ENCODE measurements at regions of chr11 and their contacts with region 1.

Region 1: GRCh38 chr11:64185816-64186498 is at the start of gene STIP1:
- DNase-seq: peak; percentile 100
- ATAC-seq: peak; percentile 92
- H3K4me3 ChIP-seq: peak within 1 kb of the TSS; percentile 60 to 75 (median 60)
- H3K27ac ChIP-seq: peak within 1 kb of the TSS; percentile 83
- H3K4me1 ChIP-seq: peaks cover 51% of the 10 kb centered on the region
- H3K27me3 ChIP-seq: no peaks in the 10 kb centered on the region
- CTCF ChIP-seq: peak; percentile 60
- EP300 ChIP-seq: peak in 1 of 2 experiments; percentile 62; a peak in 2 of 4 replicates
- POLR2A ChIP-seq: peak in 1 of 2 experiments; percentile 82; a peak in 2 of 4 replicates
- RAD21 ChIP-seq: no peak; the same call in 1 of the 2 replicates
- total RNA-seq, gene STIP1: 217 and 245 TPM in 2 replicates

Region 2: GRCh38 chr11:64088162-64089026 is 97.6 kb before region 1 on chr11:
- CTCF ChIA-PET with region 1: no interaction called
- POLR2A ChIA-PET with region 1: no interaction called
- in situ Hi-C with region 1: no loop called
- intact Hi-C with region 1: no loop called
- DNase-seq: peak; percentile 45
- ATAC-seq: peak; percentile 34
- H3K4me3 ChIP-seq: no peak overlapping the region
- H3K27ac ChIP-seq: no peak overlapping the region
- H3K4me1 ChIP-seq: peaks cover 59% of the 10 kb centered on the region
- H3K27me3 ChIP-seq: no peaks in the 10 kb centered on the region
- CTCF ChIP-seq: peak; percentile 70
- EP300 ChIP-seq: no peak
- POLR2A ChIP-seq: no peak
- RAD21 ChIP-seq: 0 out of 2 replicates have a peak, but pooled peaks have one; percentile 37

Region 3: GRCh38 chr11:64165849-64166635 is 19.9 kb before region 1 on chr11 and contains the start of gene MACROD1:
- CTCF ChIA-PET with region 1: no interaction called
- POLR2A ChIA-PET with region 1: interaction called, 31 read pairs
- in situ Hi-C with region 1: no loop called
- intact Hi-C with region 1: no loop called
- DNase-seq: peak; percentile 86
- ATAC-seq: peak; percentile 93
- H3K4me3 ChIP-seq: peak within 1 kb of the TSS; percentile 55 to 94 (median 94)
- H3K27ac ChIP-seq: peak within 1 kb of the TSS; percentile 89
- H3K4me1 ChIP-seq: peaks cover 43% of the 10 kb centered on the region
- H3K27me3 ChIP-seq: no peaks in the 10 kb centered on the region; a peak in 1 of 5 replicates
- CTCF ChIP-seq: no peak; the same call in 1 of the 2 replicates
- EP300 ChIP-seq: no peak
- POLR2A ChIP-seq: peak; percentile 63 to 76; a peak in 3 of 4 replicates
- RAD21 ChIP-seq: peak; percentile 54; the same call in 1 of the 2 replicates
- total RNA-seq, gene MACROD1: 34.5 and 39.6 TPM in 2 replicates

Region 4: DNA sequence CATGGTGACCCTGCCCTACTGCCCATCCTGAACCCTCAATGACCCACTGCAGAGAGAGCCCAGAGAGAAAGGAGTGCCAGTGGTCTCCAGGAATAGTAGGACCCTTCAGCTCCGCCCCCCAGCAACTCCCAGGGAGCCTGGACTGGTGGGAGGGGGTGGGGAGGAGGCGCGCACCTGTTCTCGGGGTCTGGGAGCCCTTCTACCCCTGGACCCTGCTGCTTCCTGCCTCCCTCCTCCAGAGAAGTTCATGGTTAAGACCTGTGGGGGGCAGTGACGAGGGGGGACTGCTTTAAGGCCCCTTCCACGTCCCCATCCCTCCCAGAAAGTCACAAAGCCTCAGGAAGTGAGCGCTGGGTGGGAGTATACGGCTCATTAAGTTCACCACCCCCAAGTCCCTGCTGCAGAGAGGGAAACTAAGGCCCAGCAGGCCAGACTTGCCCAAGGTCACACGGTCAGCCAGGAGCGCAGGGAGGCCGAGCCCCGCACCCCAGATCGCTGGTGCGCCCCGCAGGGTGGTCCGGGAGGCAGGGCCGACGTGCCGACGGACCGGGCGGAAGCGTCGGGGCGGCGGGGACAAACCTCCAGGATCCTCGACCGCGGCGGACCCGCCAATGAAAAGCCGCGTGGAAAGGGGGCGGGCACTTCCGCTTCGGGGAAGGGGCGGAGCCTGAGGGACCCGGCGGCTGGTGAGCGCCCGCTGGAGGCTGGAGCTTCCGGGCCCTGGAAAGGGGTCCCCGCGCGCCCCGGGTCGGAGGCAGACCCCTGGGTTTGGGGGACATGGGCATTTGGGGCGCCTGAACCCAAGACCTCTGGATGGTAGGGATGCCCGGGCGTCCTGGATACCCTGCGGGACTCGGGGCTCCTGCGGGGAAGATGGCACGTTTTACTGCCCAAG is 39.9 kb after region 1 on chr11 and contains the starts of genes NUDT22 and TRPT1:
- CTCF ChIA-PET with region 1: no interaction called
- POLR2A ChIA-PET with region 1: interaction called, 19 read pairs
- in situ Hi-C with region 1: no loop called
- intact Hi-C with region 1: no loop called
- DNase-seq: peak; percentile 77
- ATAC-seq: peak; percentile 78
- H3K4me3 ChIP-seq: peak within 1 kb of the TSS; percentile 78 to 96 (median 82)
- H3K27ac ChIP-seq: peak within 1 kb of the TSS; percentile 56
- H3K4me1 ChIP-seq: peaks cover 34% of the 10 kb centered on the region
- H3K27me3 ChIP-seq: no peaks in the 10 kb centered on the region
- CTCF ChIP-seq: peak; percentile 65
- EP300 ChIP-seq: no peak
- POLR2A ChIP-seq: peak in 1 of 2 experiments; percentile 9; a peak in 1 of 4 replicates
- RAD21 ChIP-seq: no peak
- total RNA-seq, gene NUDT22: 38.5 and 39.8 TPM in 2 replicates
- total RNA-seq, gene TRPT1: 21.0 and 24.8 TPM in 2 replicates

Region 5: GRCh38 chr11:64246871-64247728 is 61.1 kb after region 1 on chr11 and contains the start of gene PPP1R14B:
- CTCF ChIA-PET with region 1: no interaction called
- POLR2A ChIA-PET with region 1: interaction called, 20 read pairs
- in situ Hi-C with region 1: no loop called
- intact Hi-C with region 1: loop called (anchors 2 kb)
- DNase-seq: peak; percentile 80
- ATAC-seq: peak; percentile 71
- H3K4me3 ChIP-seq: peak within 1 kb of the TSS; percentile 79 to 95 (median 84)
- H3K27ac ChIP-seq: peak within 1 kb of the TSS; percentile 83
- H3K4me1 ChIP-seq: peaks cover 69% of the 10 kb centered on the region
- H3K27me3 ChIP-seq: no peaks in the 10 kb centered on the region; a peak in 1 of 5 replicates
- CTCF ChIP-seq: no peak; the same call in none of the 2 replicates
- EP300 ChIP-seq: no peak
- POLR2A ChIP-seq: peak in 1 of 2 experiments; percentile 44; a peak in 1 of 4 replicates
- RAD21 ChIP-seq: no peak
- total RNA-seq, gene PPP1R14B: 120 and 148 TPM in 2 replicates

Region 6: DNA sequence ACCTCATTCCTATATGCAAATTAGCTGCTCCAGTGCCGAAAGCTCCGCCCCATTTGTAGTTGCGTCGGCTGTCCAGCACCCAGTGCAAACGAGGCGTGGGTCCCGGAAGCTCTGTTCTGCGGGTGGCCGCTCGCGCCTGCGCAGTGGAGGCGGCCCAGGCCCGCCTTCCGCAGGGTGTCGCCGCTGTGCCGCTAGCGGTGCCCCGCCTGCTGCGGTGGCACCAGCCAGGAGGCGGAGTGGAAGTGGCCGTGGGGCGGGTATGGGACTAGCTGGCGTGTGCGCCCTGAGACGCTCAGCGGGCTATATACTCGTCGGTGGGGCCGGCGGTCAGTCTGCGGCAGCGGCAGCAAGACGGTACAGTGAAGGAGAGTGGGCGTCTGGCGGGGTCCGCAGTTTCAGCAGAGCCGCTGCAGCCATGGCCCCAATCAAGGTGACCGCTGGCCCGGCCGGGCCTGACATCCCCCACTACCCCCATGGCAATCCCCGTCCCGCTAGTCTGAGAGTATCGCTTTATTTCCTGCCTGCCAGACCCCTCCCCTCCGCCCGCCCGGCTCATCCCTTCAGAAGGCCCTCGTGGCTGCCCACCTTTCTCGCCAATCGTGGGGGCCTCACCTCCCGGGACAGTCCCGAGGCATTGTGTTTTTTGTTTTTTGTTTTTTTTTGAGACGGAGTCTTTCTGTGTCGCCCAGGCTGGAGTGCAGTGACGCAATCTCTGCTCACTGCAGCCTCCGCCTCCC is 132.2 kb after region 1 on chr11 and contains the start of gene PRDX5:
- CTCF ChIA-PET with region 1: no interaction called
- POLR2A ChIA-PET with region 1: interaction called, 12 read pairs
- in situ Hi-C with region 1: no loop called
- intact Hi-C with region 1: no loop called
- DNase-seq: peak; percentile 94
- ATAC-seq: peak; percentile 81
- H3K4me3 ChIP-seq: peak within 1 kb of the TSS; percentile 97 to 99 (median 99)
- H3K27ac ChIP-seq: peak within 1 kb of the TSS; percentile 98
- H3K4me1 ChIP-seq: peaks cover 22% of the 10 kb centered on the region
- H3K27me3 ChIP-seq: no peaks in the 10 kb centered on the region; a peak in 1 of 5 replicates
- CTCF ChIP-seq: peak; percentile 85
- EP300 ChIP-seq: 0 out of 4 replicates have a peak, but pooled peaks of 1 of the 2 experiments have one; percentile 5
- POLR2A ChIP-seq: peak in 1 of 2 experiments; percentile 83
- RAD21 ChIP-seq: peak; percentile 80
- total RNA-seq, gene PRDX5: 215 and 266 TPM in 2 replicates